IMR-90 (cell line): ENCODE measurements at regions of chr20 and their contacts with region 1.

Region 1: GRCh38 chr20:56392282-56393137 is at the start of gene CSTF1:
- DNase-seq: peak; percentile 100
- ATAC-seq: peak; percentile 97
- H3K4me3 ChIP-seq: peak within 1 kb of the TSS; percentile 67
- H3K27ac ChIP-seq: peak within 1 kb of the TSS; percentile 83
- H3K4me1 ChIP-seq: peaks cover 2% of the 10 kb centered on the region; the same call in 1 of the 2 replicates
- H3K27me3 ChIP-seq: no peaks in the 10 kb centered on the region
- CTCF ChIP-seq: no peak
- POLR2A ChIP-seq: no peak; the same call in 1 of the 2 replicates
- RAD21 ChIP-seq: no peak
- total RNA-seq, gene CSTF1: 86.4 and 105 TPM in 2 replicates

Region 2: GRCh38 chr20:56017560-56017959 is 374.9 kb before region 1 on chr20:
- CTCF ChIA-PET with region 1: no interaction called
- POLR2A ChIA-PET with region 1: no interaction called
- dilution Hi-C with region 1: no loop called
- in situ Hi-C with region 1: no loop called
- intact Hi-C with region 1: no loop called
- DNase-seq: no peak
- ATAC-seq: no peak
- H3K4me3 ChIP-seq: no peak overlapping the region
- H3K27ac ChIP-seq: no peak overlapping the region
- H3K4me1 ChIP-seq: no peaks in the 10 kb centered on the region
- H3K27me3 ChIP-seq: no peaks in the 10 kb centered on the region
- CTCF ChIP-seq: no peak
- POLR2A ChIP-seq: no peak
- RAD21 ChIP-seq: no peak

Region 3: GRCh38 chr20:56460459-56460858 is 67.9 kb after region 1 on chr20:
- CTCF ChIA-PET with region 1: no interaction called
- POLR2A ChIA-PET with region 1: no interaction called
- dilution Hi-C with region 1: no loop called
- in situ Hi-C with region 1: loop called (anchors 5 kb)
- intact Hi-C with region 1: no loop called
- DNase-seq: no peak
- ATAC-seq: no peak
- H3K4me3 ChIP-seq: no peak overlapping the region
- H3K27ac ChIP-seq: no peak overlapping the region
- H3K4me1 ChIP-seq: no peaks in the 10 kb centered on the region
- H3K27me3 ChIP-seq: no peaks in the 10 kb centered on the region
- CTCF ChIP-seq: no peak
- POLR2A ChIP-seq: no peak
- RAD21 ChIP-seq: no peak

Region 4: DNA sequence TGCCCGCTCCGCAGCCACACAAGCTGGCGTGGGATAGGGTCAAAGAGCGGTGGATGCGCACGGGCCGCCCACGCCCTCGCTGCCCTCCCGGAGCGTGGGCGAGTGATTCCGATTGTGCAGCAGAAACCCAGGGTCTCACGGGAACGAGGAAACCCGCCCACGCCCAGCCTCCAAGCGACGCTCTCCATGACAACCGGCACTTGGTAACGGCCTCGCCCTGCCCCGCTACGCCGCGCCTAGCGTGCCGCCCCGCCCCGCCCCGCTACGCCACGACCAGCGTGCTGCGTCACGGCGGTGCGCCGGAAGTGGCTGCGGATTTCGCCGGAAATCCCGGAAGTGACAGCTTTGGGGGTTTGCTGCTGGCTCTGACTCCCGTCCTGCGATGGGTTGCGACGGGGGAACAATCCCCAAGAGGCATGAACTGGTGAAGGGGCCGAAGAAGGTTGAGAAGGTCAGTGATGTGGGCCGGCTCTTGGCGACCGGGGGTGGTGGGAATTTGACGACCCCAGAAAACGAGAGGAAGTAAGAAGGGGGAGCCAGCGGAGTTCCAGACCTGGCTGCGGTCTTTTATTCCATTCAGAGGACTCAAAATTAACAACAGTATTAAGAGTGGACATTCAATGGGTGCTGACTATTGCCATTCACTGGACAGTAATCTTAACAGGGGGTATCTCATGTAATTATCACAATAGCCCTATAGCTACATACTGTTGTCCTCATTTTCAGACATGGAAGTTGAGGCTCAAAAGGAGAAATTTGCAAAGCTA is 76.0 kb after region 1 on chr20 and contains the start of gene RTF2:
- CTCF ChIA-PET with region 1: no interaction called
- POLR2A ChIA-PET with region 1: no interaction called
- dilution Hi-C with region 1: no loop called
- in situ Hi-C with region 1: loop called (anchors 5 kb)
- intact Hi-C with region 1: loop called (anchors 2 kb)
- DNase-seq: peak; percentile 96
- ATAC-seq: peak; percentile 100
- H3K4me3 ChIP-seq: peak within 1 kb of the TSS; percentile 85
- H3K27ac ChIP-seq: peak within 1 kb of the TSS; percentile 84
- H3K4me1 ChIP-seq: 0 out of 2 replicates have a peak, but pooled peaks cover 2% of the 10 kb centered on the region
- H3K27me3 ChIP-seq: no peaks in the 10 kb centered on the region
- CTCF ChIP-seq: no peak
- POLR2A ChIP-seq: peak; percentile 75
- RAD21 ChIP-seq: peak; percentile 42; the same call in 1 of the 2 replicates
- total RNA-seq, gene RTF2: 109 and 118 TPM in 2 replicates

Region 5: GRCh38 chr20:57351042-57351783 is 958.7 kb after region 1 on chr20 and contains the start of gene RAE1:
- CTCF ChIA-PET with region 1: no interaction called
- POLR2A ChIA-PET with region 1: no interaction called
- dilution Hi-C with region 1: no loop called
- in situ Hi-C with region 1: loop called (anchors 25 kb)
- intact Hi-C with region 1: no loop called
- DNase-seq: peak; percentile 92
- ATAC-seq: peak; percentile 93
- H3K4me3 ChIP-seq: peak within 1 kb of the TSS; percentile 82
- H3K27ac ChIP-seq: peak within 1 kb of the TSS; percentile 89
- H3K4me1 ChIP-seq: peaks cover 3% of the 10 kb centered on the region; the same call in 1 of the 2 replicates
- H3K27me3 ChIP-seq: no peaks in the 10 kb centered on the region
- CTCF ChIP-seq: no peak
- POLR2A ChIP-seq: peak; percentile 91
- RAD21 ChIP-seq: no peak
- total RNA-seq, gene RAE1: 32.5 and 32.8 TPM in 2 replicates